Activated B cell treated with CpG ODN at 0.5 μM for 24 hours (primary cell): ENCODE measurements at regions of chr12 and their contacts with region 1.

Region 1: DNA sequence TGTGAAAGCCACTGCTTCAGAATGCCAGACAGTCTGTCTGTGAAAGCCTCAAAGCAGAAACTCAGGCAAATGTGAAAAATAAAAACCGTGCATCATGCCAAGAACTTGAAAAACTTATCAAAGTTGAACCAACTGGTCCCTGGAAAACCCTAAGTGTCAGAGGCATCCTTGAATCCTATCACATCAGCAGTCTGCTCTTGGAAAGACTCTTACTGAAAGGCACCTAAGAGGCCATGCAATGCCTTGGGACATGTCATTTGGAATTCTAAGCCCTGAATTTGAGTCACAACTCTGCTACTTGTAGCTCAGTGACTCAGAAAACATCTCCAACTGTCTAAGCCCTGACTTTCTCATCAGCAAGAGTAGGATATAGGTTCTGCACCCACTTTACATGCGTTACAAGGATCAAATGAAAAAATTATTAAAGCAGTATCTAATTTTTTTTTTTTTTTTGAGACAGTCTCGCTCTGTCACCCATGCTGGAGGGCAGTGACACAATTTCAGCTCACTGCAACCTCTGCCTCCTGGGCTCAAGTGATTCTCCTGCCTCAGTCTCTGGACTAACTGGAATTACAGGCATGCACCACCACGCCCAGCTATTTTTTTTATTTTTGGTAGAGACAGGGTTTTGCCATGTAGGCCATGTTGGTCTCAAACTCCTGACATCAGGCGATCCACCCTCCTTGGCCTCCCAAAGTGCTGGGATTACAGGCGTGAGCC is 62.6 kb upstream of the GRIN2B start:
- DNase-seq: no peak
- ATAC-seq: no peak
- H3K4me3 Mint-ChIP-seq: no peak overlapping the region
- H3K27ac Mint-ChIP-seq: no peak overlapping the region
- H3K4me1 Mint-ChIP-seq: no peaks in the 10 kb centered on the region
- H3K27me3 Mint-ChIP-seq: peaks cover 14% of the 10 kb centered on the region
- CTCF ChIP-seq: no peak

Region 2: DNA sequence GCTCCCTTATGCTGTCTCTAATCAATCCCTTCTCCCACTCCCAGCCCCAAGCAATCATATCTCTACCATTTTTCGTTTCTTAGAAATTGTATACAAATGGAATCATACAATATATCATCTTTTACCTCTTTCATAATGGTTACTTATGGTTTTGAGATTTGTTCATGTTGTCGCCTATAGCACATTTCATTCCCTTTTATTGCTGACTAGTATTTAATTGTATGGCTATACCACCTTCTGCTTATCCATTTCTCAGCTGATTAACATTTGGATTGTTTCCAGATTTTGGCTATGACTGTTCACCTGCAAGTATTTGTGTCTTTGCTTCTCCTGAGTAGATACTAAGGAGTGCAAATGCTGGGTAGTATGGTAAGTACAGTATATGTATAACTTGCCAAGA is 25.9 kb before region 1 on chr12:
- CTCF ChIA-PET with region 1: no interaction called
- POLR2A ChIA-PET with region 1: no interaction called
- intact Hi-C with region 1: no loop called
- DNase-seq: no peak
- ATAC-seq: no peak
- H3K4me3 Mint-ChIP-seq: no peak overlapping the region
- H3K27ac Mint-ChIP-seq: no peak overlapping the region
- H3K4me1 Mint-ChIP-seq: no peaks in the 10 kb centered on the region
- H3K27me3 Mint-ChIP-seq: peaks cover 8% of the 10 kb centered on the region
- CTCF ChIP-seq: no peak

Region 3: DNA sequence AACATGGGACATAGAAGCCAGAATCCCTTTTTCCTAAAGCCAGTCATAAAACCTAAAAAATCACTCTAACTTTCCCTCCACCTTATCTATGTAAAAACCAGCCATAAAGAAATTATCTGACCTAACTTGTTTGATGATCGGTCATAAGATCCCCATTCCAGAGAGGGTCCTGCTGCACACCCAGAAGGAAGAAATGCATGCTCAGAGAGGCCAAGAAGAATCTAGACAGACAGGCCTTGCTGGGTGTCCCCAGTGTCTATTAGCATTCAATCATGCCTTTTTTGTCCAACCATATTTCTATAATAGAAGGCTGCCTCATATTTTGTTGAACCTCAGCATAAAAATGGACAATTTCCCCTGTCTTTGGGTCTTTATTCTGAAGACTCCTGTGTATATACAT is 16.9 kb after region 1 on chr12:
- CTCF ChIA-PET with region 1: no interaction called
- POLR2A ChIA-PET with region 1: no interaction called
- intact Hi-C with region 1: loop called (anchors 1 kb)
- DNase-seq: no peak
- ATAC-seq: no peak
- H3K4me3 Mint-ChIP-seq: no peak overlapping the region
- H3K27ac Mint-ChIP-seq: no peak overlapping the region
- H3K4me1 Mint-ChIP-seq: peaks cover 4% of the 10 kb centered on the region
- H3K27me3 Mint-ChIP-seq: peaks cover 8% of the 10 kb centered on the region
- CTCF ChIP-seq: no peak

Region 4: GRCh38 chr12:14111230-14111865 is 67.4 kb after region 1 on chr12:
- CTCF ChIA-PET with region 1: no interaction called
- POLR2A ChIA-PET with region 1: interaction called, 10 read pairs
- intact Hi-C with region 1: no loop called
- DNase-seq: peak; percentile 21
- ATAC-seq: peak; percentile 96
- H3K4me3 Mint-ChIP-seq: no peak overlapping the region
- H3K27ac Mint-ChIP-seq: peak overlapping the region; percentile 18
- H3K4me1 Mint-ChIP-seq: peaks cover 13% of the 10 kb centered on the region
- H3K27me3 Mint-ChIP-seq: no peaks in the 10 kb centered on the region
- CTCF ChIP-seq: no peak